Naive thymus-derived CD4-positive, alpha-beta T cell (primary cell): ENCODE measurements at regions of chr1 and their contacts with region 1.

Region 1: DNA sequence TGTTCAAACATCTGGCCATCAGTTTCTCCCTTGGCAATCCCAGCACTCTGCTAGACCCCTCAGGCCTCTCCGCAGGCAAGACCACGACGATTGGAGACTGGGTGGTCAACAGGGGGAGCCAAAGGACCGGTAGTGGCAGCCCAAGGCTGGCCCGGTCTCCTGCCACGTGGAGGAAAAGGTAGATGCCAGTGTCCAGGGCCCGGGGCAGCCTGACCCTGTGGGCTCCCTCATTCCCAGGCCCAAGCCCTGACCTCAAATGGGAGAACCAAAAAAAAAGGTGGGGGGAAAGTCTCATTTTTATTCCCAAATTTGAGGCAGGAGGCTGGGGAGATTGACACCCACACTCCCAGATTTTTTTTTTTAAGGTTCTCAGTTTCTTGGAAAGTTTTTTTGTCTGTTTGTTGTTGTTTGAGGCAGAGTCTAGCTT is 24.8 kb downstream of the S100A6 start:
- DNase-seq: peak; percentile 47 to 82 (median 68)
- ATAC-seq: peak; percentile 92
- H3K4me3 ChIP-seq: no peak overlapping the region
- H3K4me3 Mint-ChIP-seq: no peak overlapping the region
- H3K27ac ChIP-seq: no peak overlapping the region
- H3K27ac Mint-ChIP-seq: peak overlapping the region in 1 of 9 donors; percentile 10
- H3K4me1 ChIP-seq: peaks cover 3 to 4% of the 10 kb centered on the region in 2 donors
- H3K4me1 Mint-ChIP-seq: peaks cover 0 to 21% (median 6%) of the 10 kb centered on the region in 7 donors
- H3K27me3 ChIP-seq: no peaks in the 10 kb centered on the region
- H3K27me3 Mint-ChIP-seq: no peaks in the 10 kb centered on the region

Region 2: GRCh38 chr1:153404768-153405167 is 106.2 kb before region 1 on chr1:
- CTCF ChIA-PET with region 1: no interaction called
- POLR2A ChIA-PET with region 1: no interaction called
- intact Hi-C with region 1: no loop called
- DNase-seq: peak; percentile 12 to 61 (median 40)
- ATAC-seq: peak; percentile 88
- H3K4me3 ChIP-seq: no peak overlapping the region
- H3K4me3 Mint-ChIP-seq: no peak overlapping the region
- H3K27ac ChIP-seq: no peak overlapping the region
- H3K27ac Mint-ChIP-seq: no peak overlapping the region
- H3K4me1 ChIP-seq: no peaks in the 10 kb centered on the region
- H3K4me1 Mint-ChIP-seq: peaks cover 0 to 25% (median 13%) of the 10 kb centered on the region in 7 donors
- H3K27me3 ChIP-seq: no peaks in the 10 kb centered on the region
- H3K27me3 Mint-ChIP-seq: peaks cover 14 to 30% (median 20%) of the 10 kb centered on the region in 5 donors

Region 3: GRCh38 chr1:153566440-153567379 is 55.7 kb after region 1 on chr1:
- CTCF ChIA-PET with region 1: interaction called, 119 read pairs
- POLR2A ChIA-PET with region 1: interaction called, 4 read pairs
- intact Hi-C with region 1: loop called (anchors 1 kb)
- DNase-seq: peak in 3 of 9 donors; percentile 38 to 82 (median 44)
- ATAC-seq: peak; percentile 88
- H3K4me3 ChIP-seq: no peak overlapping the region
- H3K4me3 Mint-ChIP-seq: peak overlapping the region in 3 of 10 donors; percentile 16 to 57 (median 56)
- H3K27ac ChIP-seq: peak overlapping the region; percentile 17
- H3K27ac Mint-ChIP-seq: peak overlapping the region in 5 of 9 donors; percentile 9 to 92 (median 87)
- H3K4me1 ChIP-seq: peaks cover 12 to 13% of the 10 kb centered on the region in 2 donors
- H3K4me1 Mint-ChIP-seq: peaks cover 25 to 32% (median 28%) of the 10 kb centered on the region in 7 donors
- H3K27me3 ChIP-seq: no peaks in the 10 kb centered on the region
- H3K27me3 Mint-ChIP-seq: peaks cover 0 to 6% (median 0%) of the 10 kb centered on the region in 5 donors

Region 4: GRCh38 chr1:153617675-153618074 is 106.7 kb after region 1 on chr1:
- CTCF ChIA-PET with region 1: interaction called, 4 read pairs
- POLR2A ChIA-PET with region 1: no interaction called
- intact Hi-C with region 1: loop called (anchors 1 kb)
- DNase-seq: peak in 6 of 9 donors; percentile 19 to 77 (median 41)
- ATAC-seq: peak; percentile 88
- H3K4me3 ChIP-seq: no peak overlapping the region
- H3K4me3 Mint-ChIP-seq: no peak overlapping the region
- H3K27ac ChIP-seq: no peak overlapping the region
- H3K27ac Mint-ChIP-seq: peak overlapping the region in 1 of 9 donors; percentile 28
- H3K4me1 ChIP-seq: no peaks in the 10 kb centered on the region
- H3K4me1 Mint-ChIP-seq: peaks cover 0 to 6% (median 0%) of the 10 kb centered on the region in 7 donors
- H3K27me3 ChIP-seq: no peaks in the 10 kb centered on the region
- H3K27me3 Mint-ChIP-seq: peaks cover 0 to 5% (median 0%) of the 10 kb centered on the region in 5 donors

Region 5: GRCh38 chr1:153677718-153678505 is 166.9 kb after region 1 on chr1:
- CTCF ChIA-PET with region 1: interaction called, 9 read pairs
- POLR2A ChIA-PET with region 1: no interaction called
- intact Hi-C with region 1: loop called in 1 of 2 experiments (anchors 2 kb)
- DNase-seq: peak in 8 of 9 donors; percentile 23 to 55 (median 44)
- ATAC-seq: peak; percentile 69
- H3K4me3 ChIP-seq: peak overlapping the region; percentile 34
- H3K4me3 Mint-ChIP-seq: peak overlapping the region; percentile 80 to 92 (median 88)
- H3K27ac ChIP-seq: no peak overlapping the region
- H3K27ac Mint-ChIP-seq: no peak overlapping the region
- H3K4me1 ChIP-seq: peaks cover 8 to 17% of the 10 kb centered on the region in 2 donors
- H3K4me1 Mint-ChIP-seq: peaks cover 18 to 25% (median 23%) of the 10 kb centered on the region in 7 donors
- H3K27me3 ChIP-seq: peaks cover 5 to 7% of the 10 kb centered on the region in 2 donors
- H3K27me3 Mint-ChIP-seq: peaks cover 33 to 56% (median 45%) of the 10 kb centered on the region in 5 donors